MCF 10A (cell line): ENCODE measurements at regions of chr5 and their contacts with region 1.

Region 1: DNA sequence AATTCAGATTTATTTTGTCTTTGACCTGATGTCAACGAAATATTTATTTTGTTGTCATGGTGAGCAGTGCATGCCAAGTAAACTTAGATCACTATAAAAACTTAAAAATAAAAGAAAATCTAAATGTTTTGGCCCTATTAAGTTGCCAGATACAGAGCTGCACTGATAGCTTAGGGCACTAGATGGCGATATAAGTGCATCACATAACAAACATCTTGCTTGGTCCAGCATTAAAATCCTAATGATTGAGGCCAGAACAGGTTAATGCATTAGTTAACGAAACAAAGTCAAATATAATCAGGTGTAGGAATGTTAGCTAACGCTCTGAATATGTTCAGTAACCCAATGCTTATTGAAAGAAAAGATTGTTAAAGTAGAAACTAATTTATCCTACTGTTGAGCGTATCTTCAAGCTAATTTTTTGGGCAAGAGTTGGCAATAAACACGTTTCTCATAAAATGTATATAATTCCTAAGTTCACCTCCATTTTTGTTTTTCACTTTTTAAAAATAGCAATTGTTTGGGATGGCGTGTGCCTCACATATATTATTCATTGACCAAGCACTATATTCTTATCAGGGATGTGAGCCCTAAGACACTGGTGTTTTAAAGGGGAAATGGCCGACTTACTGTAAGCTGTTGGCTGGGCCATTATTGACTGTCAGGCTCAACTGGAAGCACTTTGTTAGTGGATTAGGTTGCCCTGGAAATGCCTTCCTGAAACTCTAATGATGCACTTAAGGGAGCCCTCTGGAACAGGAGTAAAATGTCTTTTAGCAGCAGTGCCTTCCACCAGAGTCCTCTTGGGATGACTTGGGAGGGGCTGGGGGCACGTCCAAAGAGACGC is 33.3 kb downstream of the KCTD16 start:
- DNase-seq: peak; percentile 83
- H3K4me3 Mint-ChIP-seq: peak overlapping the region; percentile 22
- H3K27ac Mint-ChIP-seq: no peak overlapping the region
- H3K4me1 Mint-ChIP-seq: peaks cover 15% of the 10 kb centered on the region
- H3K27me3 Mint-ChIP-seq: peaks cover 46% of the 10 kb centered on the region
- CTCF ChIP-seq: peak; percentile 92

Region 2: DNA sequence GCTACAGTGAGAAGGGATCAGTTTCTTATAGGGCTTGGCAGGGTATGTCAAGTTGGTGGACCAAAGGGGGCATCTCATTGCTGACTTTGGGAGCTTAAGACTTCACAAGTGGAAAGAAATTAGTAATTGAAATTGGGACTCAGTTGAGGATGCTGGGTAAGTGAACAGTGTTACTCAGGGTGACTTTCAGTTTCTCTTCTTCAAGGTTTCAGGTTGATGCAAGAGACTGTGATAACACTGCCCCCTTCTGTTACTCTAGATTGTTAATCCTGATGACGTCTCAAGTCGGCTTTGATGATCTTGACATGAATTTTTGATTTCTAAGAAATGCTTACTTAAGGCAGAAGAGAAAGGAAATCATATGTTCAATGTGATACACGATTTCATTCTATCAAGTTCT is 12.0 kb before region 1 on chr5:
- CTCF ChIA-PET with region 1: interaction called, 36 read pairs
- POLR2A ChIA-PET with region 1: interaction called, 3 read pairs
- intact Hi-C with region 1: no loop called
- DNase-seq: peak; percentile 86
- H3K4me3 Mint-ChIP-seq: no peak overlapping the region
- H3K27ac Mint-ChIP-seq: no peak overlapping the region
- H3K4me1 Mint-ChIP-seq: peaks cover 30% of the 10 kb centered on the region
- H3K27me3 Mint-ChIP-seq: no peaks in the 10 kb centered on the region
- CTCF ChIP-seq: peak; percentile 41

Region 3: GRCh38 chr5:144390133-144390532 is 186.2 kb after region 1 on chr5:
- CTCF ChIA-PET with region 1: interaction called, 92 read pairs
- POLR2A ChIA-PET with region 1: no interaction called
- intact Hi-C with region 1: loop called (anchors 1 kb)
- DNase-seq: peak; percentile 44
- H3K4me3 Mint-ChIP-seq: no peak overlapping the region
- H3K27ac Mint-ChIP-seq: no peak overlapping the region
- H3K4me1 Mint-ChIP-seq: peaks cover 9% of the 10 kb centered on the region
- H3K27me3 Mint-ChIP-seq: no peaks in the 10 kb centered on the region
- CTCF ChIP-seq: peak; percentile 43

Region 4: GRCh38 chr5:145101246-145101645 is 897.3 kb after region 1 on chr5:
- CTCF ChIA-PET with region 1: interaction called, 9 read pairs
- POLR2A ChIA-PET with region 1: no interaction called
- intact Hi-C with region 1: loop called (anchors 1 kb)
- DNase-seq: peak; percentile 34
- H3K4me3 Mint-ChIP-seq: no peak overlapping the region
- H3K27ac Mint-ChIP-seq: no peak overlapping the region
- H3K4me1 Mint-ChIP-seq: no peaks in the 10 kb centered on the region
- H3K27me3 Mint-ChIP-seq: no peaks in the 10 kb centered on the region
- CTCF ChIP-seq: peak; percentile 55

Region 5: DNA sequence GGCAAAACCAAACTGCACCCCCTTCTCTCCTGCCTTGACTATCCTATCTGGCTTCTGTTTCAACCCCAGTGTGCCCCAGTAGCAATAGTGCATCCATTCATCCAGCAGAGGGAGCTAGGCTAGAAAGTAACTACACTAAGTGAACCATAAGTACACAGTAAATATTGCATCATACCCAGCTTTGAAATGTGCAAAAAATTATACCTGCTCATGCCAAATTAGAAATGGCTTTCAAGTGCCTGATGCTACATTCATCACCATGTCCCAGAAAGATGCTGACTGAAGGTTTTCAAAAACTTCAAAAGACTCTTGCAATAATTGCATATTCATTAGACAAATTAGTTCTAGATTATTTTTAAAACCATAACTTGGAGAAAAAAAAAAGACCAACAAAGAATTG is 1477.7 kb after region 1 on chr5:
- CTCF ChIA-PET with region 1: interaction called, 8 read pairs
- POLR2A ChIA-PET with region 1: no interaction called
- intact Hi-C with region 1: loop called (anchors 2 kb)
- DNase-seq: peak; percentile 94
- H3K4me3 Mint-ChIP-seq: no peak overlapping the region
- H3K27ac Mint-ChIP-seq: no peak overlapping the region
- H3K4me1 Mint-ChIP-seq: no peaks in the 10 kb centered on the region
- H3K27me3 Mint-ChIP-seq: no peaks in the 10 kb centered on the region
- CTCF ChIP-seq: peak; percentile 87

Region 6: DNA sequence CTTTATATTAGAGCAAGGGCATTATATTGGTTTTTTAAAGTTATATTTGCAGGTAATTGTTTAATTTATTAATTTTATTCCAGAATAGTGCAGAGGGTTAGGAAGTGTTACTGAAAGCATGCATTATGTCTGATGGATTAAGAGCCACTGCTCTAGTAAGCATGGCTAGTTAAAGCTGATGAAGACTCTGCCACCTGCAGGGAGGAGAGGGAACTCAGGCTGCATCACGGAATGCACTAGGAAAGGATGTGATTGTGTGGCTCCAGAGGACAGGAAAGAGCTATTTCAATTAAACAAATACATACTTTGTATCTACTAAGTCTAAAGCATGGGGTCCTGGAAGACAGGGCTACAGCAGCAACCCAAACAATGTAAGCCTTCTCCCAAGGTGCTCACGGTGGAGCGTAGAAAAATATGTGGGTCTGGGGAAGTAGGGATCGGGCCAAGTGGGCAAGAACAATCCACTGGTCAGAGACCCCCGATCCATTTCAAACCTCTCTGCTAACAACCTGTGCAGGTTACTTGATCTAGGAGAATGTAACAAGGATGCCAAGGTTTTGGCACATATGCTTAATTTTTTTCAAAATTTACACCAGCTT is 1684.1 kb after region 1 on chr5:
- CTCF ChIA-PET with region 1: interaction called, 3 read pairs
- POLR2A ChIA-PET with region 1: no interaction called
- intact Hi-C with region 1: loop called (anchors 2 kb)
- DNase-seq: peak; percentile 77
- H3K4me3 Mint-ChIP-seq: no peak overlapping the region
- H3K27ac Mint-ChIP-seq: no peak overlapping the region
- H3K4me1 Mint-ChIP-seq: peaks cover 5% of the 10 kb centered on the region
- H3K27me3 Mint-ChIP-seq: no peaks in the 10 kb centered on the region
- CTCF ChIP-seq: peak; percentile 79